ENCODE measurements at regions of chr10 and their contacts with region 1.

Region 1: DNA sequence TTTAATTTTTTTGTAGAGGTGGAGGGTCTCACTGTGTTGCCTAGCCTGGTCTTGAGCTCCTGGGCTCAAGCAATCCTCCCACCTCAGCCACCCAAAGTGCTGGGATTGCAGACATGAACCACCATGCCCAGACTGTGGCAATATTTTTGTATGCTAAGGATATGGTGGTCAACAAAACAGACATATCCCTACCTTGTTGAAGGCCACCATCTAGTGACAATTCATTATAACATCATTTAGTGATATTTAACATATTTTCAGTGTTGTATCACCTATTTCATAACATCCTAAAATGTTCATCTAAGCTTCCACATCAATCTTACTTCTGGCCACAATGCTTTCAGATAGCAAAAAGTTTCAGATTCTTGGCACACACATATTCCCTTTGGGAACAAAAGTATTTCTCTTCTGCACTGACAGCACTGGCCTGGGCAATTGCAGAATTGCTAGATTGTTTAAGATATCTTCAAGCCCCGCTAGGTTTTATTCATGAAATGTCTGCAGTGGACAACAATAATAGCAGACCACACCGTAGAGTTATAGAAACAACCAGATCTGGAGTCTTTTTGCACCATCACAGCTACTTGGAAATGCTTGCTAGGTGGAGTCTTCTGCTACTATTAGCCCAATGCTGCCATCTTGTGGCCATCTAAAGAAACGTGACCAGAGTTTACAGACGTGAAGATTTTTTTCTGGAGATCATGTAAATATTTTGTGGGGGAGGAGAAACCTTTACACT is 58.4 kb downstream of the DNAJC12 start:
- DNase-seq: no peak
- ATAC-seq: peak; percentile 77
- H3K4me3 ChIP-seq: no peak overlapping the region
- H3K27ac ChIP-seq: no peak overlapping the region
- H3K4me1 ChIP-seq: peaks cover 38% of the 10 kb centered on the region
- H3K27me3 ChIP-seq: no peaks in the 10 kb centered on the region
- CTCF ChIP-seq: peak; percentile 65 to 88 (median 72); a peak in 5 of 6 replicates
- EP300 ChIP-seq: no peak
- POLR2A ChIP-seq: no peak
- RAD21 ChIP-seq: peak; percentile 96

Region 2: GRCh38 chr10:66931340-66931948 is 848.2 kb before region 1 on chr10:
- CTCF ChIA-PET with region 1: interaction called, 21 read pairs
- POLR2A ChIA-PET with region 1: no interaction called
- RAD21 ChIA-PET with region 1: interaction called, 5 read pairs
- SMC1A ChIA-PET with region 1: interaction called, 10 read pairs
- in situ Hi-C with region 1: no loop called
- intact Hi-C with region 1: loop called (anchors 5 kb)
- DNase-seq: peak; percentile 8
- ATAC-seq: peak; percentile 79
- H3K4me3 ChIP-seq: no peak overlapping the region
- H3K27ac ChIP-seq: no peak overlapping the region
- H3K4me1 ChIP-seq: no peaks in the 10 kb centered on the region
- H3K27me3 ChIP-seq: peaks cover 0 to 8% of the 10 kb centered on the region in 2 experiments; a peak in 1 of 4 replicates
- CTCF ChIP-seq: peak; percentile 65 to 72 (median 65)
- EP300 ChIP-seq: no peak
- POLR2A ChIP-seq: no peak
- RAD21 ChIP-seq: peak; percentile 82

Region 3: GRCh38 chr10:67506082-67506756 is 273.4 kb before region 1 on chr10:
- CTCF ChIA-PET with region 1: interaction called, 10 read pairs
- POLR2A ChIA-PET with region 1: no interaction called
- RAD21 ChIA-PET with region 1: interaction called, 11 read pairs
- SMC1A ChIA-PET with region 1: interaction called, 11 read pairs
- in situ Hi-C with region 1: no loop called
- intact Hi-C with region 1: no loop called
- DNase-seq: no peak
- ATAC-seq: no peak
- H3K4me3 ChIP-seq: no peak overlapping the region
- H3K27ac ChIP-seq: no peak overlapping the region
- H3K4me1 ChIP-seq: no peaks in the 10 kb centered on the region
- H3K27me3 ChIP-seq: no peaks in the 10 kb centered on the region
- CTCF ChIP-seq: no peak
- EP300 ChIP-seq: no peak
- POLR2A ChIP-seq: no peak
- RAD21 ChIP-seq: no peak

Region 4: DNA sequence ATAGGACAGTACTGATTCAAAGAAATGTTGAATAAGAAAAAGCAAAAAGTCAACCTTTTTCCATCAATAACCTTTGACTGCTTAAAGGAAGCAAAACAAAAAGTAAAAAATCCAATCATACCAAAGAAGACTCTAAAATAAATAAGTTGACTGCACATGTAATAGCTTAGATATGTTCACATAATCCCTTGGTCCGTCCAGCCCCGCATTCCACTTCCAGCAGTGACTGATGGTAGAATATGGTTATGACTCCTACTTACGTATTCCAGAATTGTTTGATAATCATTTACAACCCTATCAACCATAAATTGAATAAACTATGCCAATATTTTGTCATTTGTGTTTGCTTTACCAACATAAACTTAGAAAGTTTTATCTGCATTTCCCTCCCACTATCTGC is 161.5 kb before region 1 on chr10:
- CTCF ChIA-PET with region 1: interaction called, 14 read pairs
- POLR2A ChIA-PET with region 1: no interaction called
- RAD21 ChIA-PET with region 1: interaction called, 4 read pairs
- SMC1A ChIA-PET with region 1: interaction called, 11 read pairs
- in situ Hi-C with region 1: no loop called
- intact Hi-C with region 1: no loop called
- DNase-seq: no peak
- ATAC-seq: no peak
- H3K4me3 ChIP-seq: no peak overlapping the region
- H3K27ac ChIP-seq: no peak overlapping the region
- H3K4me1 ChIP-seq: no peaks in the 10 kb centered on the region; the same call in 1 of the 2 replicates
- H3K27me3 ChIP-seq: no peaks in the 10 kb centered on the region
- CTCF ChIP-seq: no peak
- EP300 ChIP-seq: no peak
- POLR2A ChIP-seq: no peak
- RAD21 ChIP-seq: no peak

Region 5: DNA sequence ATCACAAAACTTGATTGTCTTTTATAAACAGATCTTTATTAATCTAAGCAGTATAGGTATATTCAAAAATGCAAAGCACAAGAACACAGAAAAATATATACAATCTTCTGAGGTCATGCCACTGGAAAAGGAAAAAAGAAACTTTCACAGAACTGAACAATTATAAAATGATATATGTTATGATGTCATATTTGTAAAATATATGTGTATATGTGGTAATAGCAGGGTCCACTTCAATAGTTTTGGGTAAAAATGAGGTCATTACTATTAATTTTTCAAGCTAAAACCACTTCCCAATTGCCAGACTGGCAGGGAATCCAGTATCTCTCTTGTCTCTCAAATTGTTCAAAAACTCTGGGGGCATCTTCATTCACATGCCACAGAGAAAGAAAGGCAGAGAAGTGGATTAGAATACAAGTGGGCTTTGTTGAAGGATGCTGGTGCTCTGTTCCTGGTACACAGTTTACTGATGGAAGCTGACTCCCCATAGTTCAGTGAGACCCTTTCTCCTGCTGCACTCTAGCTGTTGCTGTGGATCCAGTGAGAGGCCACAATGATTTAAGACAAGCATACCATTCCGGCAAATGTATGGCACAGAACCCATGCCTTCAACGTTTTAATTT is 103.3 kb before region 1 on chr10:
- CTCF ChIA-PET with region 1: interaction called, 13 read pairs
- POLR2A ChIA-PET with region 1: no interaction called
- RAD21 ChIA-PET with region 1: interaction called, 4 read pairs
- SMC1A ChIA-PET with region 1: interaction called, 221 read pairs
- in situ Hi-C with region 1: no loop called
- intact Hi-C with region 1: no loop called
- DNase-seq: no peak
- ATAC-seq: no peak
- H3K4me3 ChIP-seq: no peak overlapping the region
- H3K27ac ChIP-seq: no peak overlapping the region
- H3K4me1 ChIP-seq: no peaks in the 10 kb centered on the region
- H3K27me3 ChIP-seq: peaks cover 0 to 3% of the 10 kb centered on the region in 2 experiments; a peak in 1 of 4 replicates
- CTCF ChIP-seq: no peak
- EP300 ChIP-seq: no peak
- POLR2A ChIP-seq: no peak
- RAD21 ChIP-seq: no peak

Region 6: DNA sequence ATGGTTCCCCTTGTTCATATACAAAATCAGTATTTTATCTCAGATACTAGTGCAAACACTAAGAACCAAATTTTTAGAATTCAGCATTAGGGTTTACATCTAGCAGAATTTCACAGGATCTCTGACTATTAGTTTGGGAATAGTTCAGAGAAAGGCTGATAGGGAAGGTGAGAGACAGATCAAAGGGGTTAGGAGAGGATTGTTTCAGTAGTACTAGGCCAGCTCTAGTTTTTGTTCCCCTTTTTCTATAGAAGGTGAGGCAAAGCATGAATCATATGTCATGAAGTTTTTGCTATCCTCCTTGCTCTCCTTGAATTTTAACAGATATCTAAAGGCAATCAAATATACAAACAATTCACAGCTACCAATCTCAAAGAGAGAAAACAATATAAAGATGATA is 57.5 kb before region 1 on chr10:
- CTCF ChIA-PET with region 1: interaction called, 10 read pairs
- POLR2A ChIA-PET with region 1: no interaction called
- RAD21 ChIA-PET with region 1: interaction called, 5 read pairs
- SMC1A ChIA-PET with region 1: interaction called, 7 read pairs
- in situ Hi-C with region 1: no loop called
- intact Hi-C with region 1: no loop called
- DNase-seq: no peak
- ATAC-seq: peak; percentile 93
- H3K4me3 ChIP-seq: no peak overlapping the region
- H3K27ac ChIP-seq: no peak overlapping the region
- H3K4me1 ChIP-seq: peaks cover 3% of the 10 kb centered on the region; the same call in 1 of the 2 replicates
- H3K27me3 ChIP-seq: no peaks in the 10 kb centered on the region
- CTCF ChIP-seq: no peak
- EP300 ChIP-seq: no peak
- POLR2A ChIP-seq: no peak
- RAD21 ChIP-seq: no peak

Region 7: DNA sequence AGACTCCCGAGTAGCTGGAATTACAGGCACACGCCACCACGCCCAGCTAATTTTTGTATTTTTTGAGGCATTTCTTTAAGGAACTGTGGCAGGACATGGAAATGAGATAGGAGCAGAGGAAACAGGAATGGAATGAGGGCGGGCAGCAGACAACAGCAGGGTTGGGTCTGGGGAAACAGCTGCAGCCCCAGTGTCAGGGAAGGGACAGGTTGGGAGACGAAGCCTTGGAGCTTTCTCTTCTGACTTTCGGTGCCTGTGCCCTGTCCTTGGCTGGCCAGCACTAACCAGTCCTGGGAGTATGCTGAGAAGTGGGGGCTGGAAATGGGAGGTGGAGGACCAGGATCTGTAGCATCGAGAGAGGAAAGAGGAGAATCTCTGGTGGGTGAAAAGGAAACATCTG is 404.9 kb after region 1 on chr10:
- CTCF ChIA-PET with region 1: no interaction called
- POLR2A ChIA-PET with region 1: no interaction called
- RAD21 ChIA-PET with region 1: no interaction called
- SMC1A ChIA-PET with region 1: no interaction called
- in situ Hi-C with region 1: no loop called
- intact Hi-C with region 1: no loop called
- DNase-seq: no peak
- ATAC-seq: no peak
- H3K4me3 ChIP-seq: no peak overlapping the region
- H3K27ac ChIP-seq: no peak overlapping the region
- H3K4me1 ChIP-seq: no peaks in the 10 kb centered on the region
- H3K27me3 ChIP-seq: no peaks in the 10 kb centered on the region
- CTCF ChIP-seq: no peak
- EP300 ChIP-seq: no peak
- POLR2A ChIP-seq: no peak
- RAD21 ChIP-seq: no peak